K562 (cell line): ENCODE measurements at regions of chr5 and their contacts with region 1.

Region 1: DNA sequence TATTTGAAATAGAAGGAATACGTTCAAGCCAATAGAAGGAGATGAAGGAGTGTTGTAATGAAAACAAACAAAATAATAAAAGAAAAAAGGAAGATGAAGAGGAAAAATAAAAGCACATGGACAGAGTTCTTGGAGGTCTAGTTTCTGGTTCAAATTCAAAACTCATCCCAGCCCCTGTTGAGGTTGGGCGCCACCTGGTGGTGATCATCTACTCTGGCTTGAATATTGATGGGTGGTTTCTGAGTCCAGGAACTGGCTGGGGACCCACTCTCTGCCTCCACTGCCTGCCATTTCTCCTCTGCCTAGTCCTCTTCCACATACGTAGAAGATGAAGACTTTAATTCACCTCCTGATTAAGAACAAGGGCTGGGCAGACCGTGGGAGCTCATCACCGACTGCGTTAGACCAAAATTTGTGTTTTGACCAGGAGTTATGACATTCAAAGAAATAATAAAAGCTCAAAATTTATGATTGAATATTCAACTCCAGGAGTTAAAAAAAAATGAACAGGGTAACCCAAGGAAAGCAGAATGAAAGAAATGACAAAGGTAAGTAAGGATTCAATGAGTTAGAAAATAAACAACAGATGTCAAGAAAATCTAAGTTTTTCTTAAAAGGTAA is 99.0 kb upstream of the SLC1A3 start:
- DNase-seq: peak; percentile 84 to 87 (median 86)
- ATAC-seq: peak; percentile 95
- H3K4me3 ChIP-seq: no peak overlapping the region
- H3K27ac ChIP-seq: no peak overlapping the region
- H3K4me1 ChIP-seq: no peaks in the 10 kb centered on the region
- H3K27me3 ChIP-seq: peaks cover 0 to 4% of the 10 kb centered on the region in 2 experiments; a peak in 1 of 5 replicates
- CTCF ChIP-seq: peak; percentile 83 to 88 (median 86)
- EP300 ChIP-seq: no peak
- POLR2A ChIP-seq: no peak
- RAD21 ChIP-seq: peak; percentile 81 to 92

Region 2: DNA sequence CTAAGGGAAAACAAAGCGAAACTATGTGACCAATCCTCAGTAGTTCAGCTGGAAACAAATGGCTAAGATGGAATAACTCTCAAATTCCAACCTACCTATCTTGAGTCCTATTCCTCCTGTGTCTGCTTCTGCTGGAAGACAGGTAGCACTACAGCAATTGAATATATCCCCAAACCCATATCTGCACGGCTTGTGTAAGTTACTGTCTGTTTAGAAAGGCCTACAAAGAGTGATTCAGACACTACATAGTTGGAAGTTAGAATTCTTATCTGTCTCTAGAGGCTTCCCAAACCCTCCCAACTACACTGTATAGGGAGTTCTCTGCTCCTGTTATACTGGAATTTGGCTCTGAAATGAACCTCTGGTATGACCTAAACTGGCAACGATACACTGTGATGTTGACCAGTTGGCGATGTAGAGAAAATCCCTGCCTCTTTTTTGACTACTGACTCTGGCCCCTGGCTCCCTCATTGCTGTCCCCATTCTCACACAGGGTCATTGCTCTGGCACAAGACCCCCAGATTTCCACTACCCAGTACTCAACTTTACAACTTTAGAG is 243.2 kb before region 1 on chr5:
- CTCF ChIA-PET with region 1: no interaction called
- POLR2A ChIA-PET with region 1: no interaction called
- in situ Hi-C with region 1: no loop called
- intact Hi-C with region 1: loop called (anchors 5 kb)
- DNase-seq: peak in 1 of 4 experiments; percentile 7
- ATAC-seq: peak; percentile 56
- H3K4me3 ChIP-seq: no peak overlapping the region
- H3K27ac ChIP-seq: 0 out of 3 replicates have a peak overlapping the region, but pooled peaks have one; percentile 17
- H3K4me1 ChIP-seq: peaks cover 0 to 6% of the 10 kb centered on the region in 2 experiments; a peak in 1 of 5 replicates
- H3K27me3 ChIP-seq: peaks cover 3 to 4% of the 10 kb centered on the region in 2 experiments; a peak in 4 of 5 replicates
- CTCF ChIP-seq: no peak
- EP300 ChIP-seq: no peak
- POLR2A ChIP-seq: no peak
- RAD21 ChIP-seq: no peak